Caco-2 (cell line): ENCODE measurements at regions of chr7 and their contacts with region 1.

Region 1: DNA sequence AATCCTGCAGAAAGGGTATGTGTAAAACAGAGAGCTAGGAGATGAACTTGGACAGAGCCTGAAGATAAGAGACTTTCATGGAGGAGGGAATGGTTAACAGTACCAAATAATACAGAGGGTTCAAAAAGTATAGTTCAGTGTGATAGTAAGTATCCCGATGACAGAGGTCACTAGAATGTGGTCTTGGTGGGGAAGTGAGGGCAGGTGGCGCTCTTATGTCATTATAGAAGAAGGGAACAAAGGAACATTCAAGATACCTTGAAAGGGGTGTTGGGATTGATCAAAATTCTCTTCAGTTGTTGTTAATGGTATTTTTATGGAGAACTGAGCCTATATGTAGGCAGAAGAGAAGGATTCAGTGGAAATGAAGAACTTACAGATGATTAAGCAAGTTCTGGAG is 312.5 kb downstream of the SUGCT start:
- DNase-seq: peak in 1 of 2 experiments; percentile 2
- H3K4me3 ChIP-seq: no peak overlapping the region
- H3K4me3 Mint-ChIP-seq: no peak overlapping the region
- H3K27ac Mint-ChIP-seq: no peak overlapping the region
- H3K4me1 ChIP-seq: no peaks in the 10 kb centered on the region
- H3K4me1 Mint-ChIP-seq: no peaks in the 10 kb centered on the region
- H3K27me3 ChIP-seq: no peaks in the 10 kb centered on the region
- H3K27me3 Mint-ChIP-seq: peaks cover 3% of the 10 kb centered on the region
- CTCF ChIP-seq: peak; percentile 13 to 17

Region 2: DNA sequence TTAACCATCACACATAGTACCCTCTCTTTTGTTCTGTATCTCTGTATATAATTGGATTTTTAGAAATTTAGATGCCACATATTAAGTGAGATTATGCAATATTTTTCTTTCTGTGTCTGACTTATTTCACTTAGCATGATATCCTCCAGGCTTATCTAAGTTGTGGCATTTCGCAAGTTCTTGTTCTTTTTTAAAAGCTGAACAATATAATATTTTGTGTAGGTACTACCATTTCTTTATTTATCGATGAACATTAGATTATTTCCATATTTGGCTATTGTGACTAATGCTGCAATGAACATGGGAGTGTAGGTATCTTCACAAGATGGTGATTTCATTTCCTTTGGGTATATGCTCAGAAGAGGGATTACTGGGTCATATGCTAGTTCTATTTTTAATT is 17.5 kb before region 1 on chr7:
- CTCF ChIA-PET with region 1: no interaction called
- POLR2A ChIA-PET with region 1: no interaction called
- intact Hi-C with region 1: no loop called
- DNase-seq: no peak
- H3K4me3 ChIP-seq: no peak overlapping the region
- H3K4me3 Mint-ChIP-seq: no peak overlapping the region
- H3K27ac Mint-ChIP-seq: no peak overlapping the region
- H3K4me1 ChIP-seq: no peaks in the 10 kb centered on the region
- H3K4me1 Mint-ChIP-seq: no peaks in the 10 kb centered on the region
- H3K27me3 ChIP-seq: no peaks in the 10 kb centered on the region
- H3K27me3 Mint-ChIP-seq: peaks cover 2% of the 10 kb centered on the region
- CTCF ChIP-seq: no peak

Region 3: GRCh38 chr7:40604601-40605438 is 157.5 kb after region 1 on chr7:
- CTCF ChIA-PET with region 1: no interaction called
- POLR2A ChIA-PET with region 1: no interaction called
- intact Hi-C with region 1: loop called (anchors 1 kb)
- DNase-seq: peak; percentile 45 to 47
- H3K4me3 ChIP-seq: no peak overlapping the region
- H3K4me3 Mint-ChIP-seq: no peak overlapping the region
- H3K27ac Mint-ChIP-seq: no peak overlapping the region
- H3K4me1 ChIP-seq: peaks cover 3% of the 10 kb centered on the region; the same call in 1 of the 2 replicates
- H3K4me1 Mint-ChIP-seq: no peaks in the 10 kb centered on the region
- H3K27me3 ChIP-seq: no peaks in the 10 kb centered on the region
- H3K27me3 Mint-ChIP-seq: no peaks in the 10 kb centered on the region
- CTCF ChIP-seq: peak; percentile 63 to 68